ENCODE measurements at regions of chr3 and their contacts with region 1.

Region 1: DNA sequence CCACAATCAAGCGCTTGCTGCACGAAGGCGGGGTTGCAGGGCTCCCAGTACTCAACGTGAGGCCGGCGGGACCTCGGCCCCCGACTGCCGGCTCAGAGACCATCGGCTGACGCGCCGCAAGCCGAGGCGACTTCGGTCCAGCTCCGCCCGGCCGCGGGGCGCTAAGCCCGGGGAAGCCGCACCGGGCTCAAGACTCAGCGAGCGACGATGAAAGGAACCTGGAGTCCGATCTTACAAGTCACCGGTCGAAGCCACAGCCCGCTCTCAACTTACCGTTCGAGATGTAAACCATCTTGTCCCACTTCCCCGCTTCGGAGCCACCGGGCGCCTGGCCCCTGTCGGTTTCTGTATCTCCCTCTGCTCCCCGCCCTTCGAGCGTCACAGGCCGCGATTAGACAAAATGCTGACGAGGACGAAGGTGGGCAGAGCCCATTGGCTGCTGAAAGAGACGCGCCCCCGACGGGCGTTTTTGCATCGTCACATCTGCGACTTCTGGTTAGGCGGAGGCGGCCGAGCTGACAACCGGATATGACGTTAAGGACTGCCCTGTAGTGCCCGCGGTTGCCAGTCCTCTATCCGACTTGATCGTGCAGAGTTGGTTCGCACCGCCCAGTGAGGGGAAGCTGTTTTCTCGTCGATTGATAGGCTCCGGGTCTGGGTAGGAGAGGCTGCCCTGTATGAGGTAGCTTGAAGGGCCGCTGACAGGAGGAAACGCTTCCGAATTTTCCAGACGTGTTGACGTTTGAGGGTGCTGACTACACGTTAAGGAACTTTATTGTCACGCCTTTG is at the start of gene SELENOK:
- DNase-seq: peak; percentile 99
- H3K4me3 Mint-ChIP-seq: peak within 1 kb of the TSS; percentile 90
- H3K27ac Mint-ChIP-seq: peak within 1 kb of the TSS; percentile 95
- H3K4me1 Mint-ChIP-seq: peaks cover 53% of the 10 kb centered on the region
- H3K27me3 Mint-ChIP-seq: peaks cover 10% of the 10 kb centered on the region
- total RNA-seq, gene SELENOK: 79.8 to 80.9 TPM

Region 2: GRCh38 chr3:53347261-53348064 is 544.2 kb before region 1 on chr3 and contains the start of gene DCP1A:
- CTCF ChIA-PET with region 1: interaction called, 3 read pairs
- POLR2A ChIA-PET with region 1: interaction called, 13 read pairs
- DNase-seq: peak; percentile 97
- H3K4me3 Mint-ChIP-seq: peak within 1 kb of the TSS; percentile 98
- H3K27ac Mint-ChIP-seq: peak within 1 kb of the TSS; percentile 89
- H3K4me1 Mint-ChIP-seq: peaks cover 32% of the 10 kb centered on the region
- H3K27me3 Mint-ChIP-seq: no peaks in the 10 kb centered on the region
- total RNA-seq, gene DCP1A: 33.0 to 34.7 TPM

Region 3: DNA sequence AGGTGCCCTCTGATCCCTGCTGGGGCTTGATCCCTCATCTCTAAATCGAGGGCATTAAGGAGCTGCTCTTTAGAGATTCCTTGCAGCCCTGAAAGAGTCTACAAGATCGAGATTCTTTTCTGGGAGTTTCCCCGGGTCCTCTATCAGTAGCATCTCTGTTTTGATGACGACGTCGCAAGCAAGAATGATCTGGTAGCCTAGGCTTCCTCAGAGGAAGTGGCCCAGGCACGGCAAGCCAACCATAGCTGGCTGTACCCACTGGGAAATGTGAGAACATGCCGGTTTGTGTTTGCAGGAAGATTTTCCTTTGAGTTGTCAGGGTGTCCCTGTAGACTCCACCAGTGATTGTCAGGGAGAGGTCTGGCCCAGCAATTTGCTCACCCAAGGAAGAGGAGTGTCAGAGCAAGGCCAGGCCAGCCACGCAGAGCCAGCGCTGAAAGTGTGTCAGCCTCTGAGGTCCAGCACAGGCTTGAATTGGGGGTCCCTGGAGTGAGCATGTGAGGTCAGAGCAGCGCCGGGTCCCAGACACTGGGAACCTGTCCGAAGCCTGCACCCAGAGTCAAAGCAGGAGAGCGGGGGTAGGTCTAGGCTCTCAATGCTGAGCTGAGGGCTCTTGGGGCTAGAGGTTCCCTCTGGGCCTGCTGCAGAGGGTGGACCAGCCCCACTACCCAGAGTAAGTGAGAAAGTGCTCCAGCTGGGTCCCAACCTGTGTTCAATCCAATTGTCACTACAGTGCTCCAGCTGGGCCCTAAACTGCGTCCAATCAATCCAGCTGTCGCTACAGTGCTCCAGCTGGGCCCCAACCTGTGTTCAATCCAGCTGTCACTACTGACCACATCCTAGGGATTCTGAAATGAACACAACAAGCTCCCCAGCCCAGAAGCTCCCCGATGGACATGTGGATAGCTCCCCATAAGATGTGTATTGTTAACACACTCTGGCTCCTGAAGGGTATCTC is 141.2 kb before region 1 on chr3:
- CTCF ChIA-PET with region 1: no interaction called
- POLR2A ChIA-PET with region 1: interaction called, 11 read pairs
- DNase-seq: peak; percentile 37
- H3K4me3 Mint-ChIP-seq: no peak overlapping the region
- H3K27ac Mint-ChIP-seq: peak overlapping the region; percentile 73
- H3K4me1 Mint-ChIP-seq: peaks cover 74% of the 10 kb centered on the region
- H3K27me3 Mint-ChIP-seq: peaks cover 2% of the 10 kb centered on the region

Region 4: GRCh38 chr3:53845103-53845880 is 46.4 kb before region 1 on chr3:
- CTCF ChIA-PET with region 1: interaction called, 3 read pairs
- POLR2A ChIA-PET with region 1: interaction called, 15 read pairs
- DNase-seq: no peak
- H3K4me3 Mint-ChIP-seq: peak overlapping the region; percentile 72
- H3K27ac Mint-ChIP-seq: peak overlapping the region; percentile 54
- H3K4me1 Mint-ChIP-seq: peaks cover 14% of the 10 kb centered on the region
- H3K27me3 Mint-ChIP-seq: peaks cover 54% of the 10 kb centered on the region

Region 5: GRCh38 chr3:53858096-53858741 is 33.5 kb before region 1 on chr3:
- CTCF ChIA-PET with region 1: interaction called, 3 read pairs
- POLR2A ChIA-PET with region 1: interaction called, 11 read pairs
- DNase-seq: no peak
- H3K4me3 Mint-ChIP-seq: no peak overlapping the region
- H3K27ac Mint-ChIP-seq: no peak overlapping the region
- H3K4me1 Mint-ChIP-seq: peaks cover 10% of the 10 kb centered on the region
- H3K27me3 Mint-ChIP-seq: peaks cover 3% of the 10 kb centered on the region

Region 6: GRCh38 chr3:54123776-54124196 is 232.1 kb after region 1 on chr3:
- CTCF ChIA-PET with region 1: no interaction called
- POLR2A ChIA-PET with region 1: no interaction called
- DNase-seq: no peak
- H3K4me3 Mint-ChIP-seq: no peak overlapping the region
- H3K27ac Mint-ChIP-seq: no peak overlapping the region
- H3K4me1 Mint-ChIP-seq: peaks cover 1% of the 10 kb centered on the region
- H3K27me3 Mint-ChIP-seq: peaks cover 51% of the 10 kb centered on the region

Measured in activated CD4-positive, alpha-beta memory T cell treated with anti-CD3 and anti-CD28 coated beads, Interleukin-2, amount 10 ng/mL, durations not matched to agents 7 days and 5 days (primary cell).